Activated T-helper 1 cell treated with anti-CD3 and anti-CD28 coated beads, Interleukin-12 subunit alpha, Interleukin-12 subunit beta, Interleukin-2, Interleukin-4 antibody, amounts not matched to agents 30 ng/mL and 10 ng/mL and 1 ng/mL, durations not matched to agents 14 hours and 24 hours and 36 hours (primary cell): ENCODE measurements at regions of chr19 and their contacts with region 1.

Region 1: GRCh38 chr19:34145741-34146202 is 26.5 kb upstream of the LSM14A start:
- DNase-seq: peak; percentile 31
- H3K4me3 Mint-ChIP-seq: no peak overlapping the region
- H3K27ac Mint-ChIP-seq: no peak overlapping the region
- H3K4me1 Mint-ChIP-seq: no peaks in the 10 kb centered on the region
- H3K27me3 Mint-ChIP-seq: no peaks in the 10 kb centered on the region

Region 2: GRCh38 chr19:34096020-34096915 is 49.5 kb before region 1 on chr19:
- intact Hi-C with region 1: loop called (anchors 1 kb)
- DNase-seq: no peak
- H3K4me3 Mint-ChIP-seq: no peak overlapping the region
- H3K27ac Mint-ChIP-seq: no peak overlapping the region
- H3K4me1 Mint-ChIP-seq: peaks cover 6% of the 10 kb centered on the region
- H3K27me3 Mint-ChIP-seq: peaks cover 12% of the 10 kb centered on the region

Region 3: GRCh38 chr19:34120846-34121639 is 24.7 kb before region 1 on chr19:
- intact Hi-C with region 1: loop called (anchors 1 kb)
- DNase-seq: peak; percentile 12
- H3K4me3 Mint-ChIP-seq: no peak overlapping the region
- H3K27ac Mint-ChIP-seq: no peak overlapping the region
- H3K4me1 Mint-ChIP-seq: peaks cover 9% of the 10 kb centered on the region
- H3K27me3 Mint-ChIP-seq: peaks cover 15% of the 10 kb centered on the region

Region 4: DNA sequence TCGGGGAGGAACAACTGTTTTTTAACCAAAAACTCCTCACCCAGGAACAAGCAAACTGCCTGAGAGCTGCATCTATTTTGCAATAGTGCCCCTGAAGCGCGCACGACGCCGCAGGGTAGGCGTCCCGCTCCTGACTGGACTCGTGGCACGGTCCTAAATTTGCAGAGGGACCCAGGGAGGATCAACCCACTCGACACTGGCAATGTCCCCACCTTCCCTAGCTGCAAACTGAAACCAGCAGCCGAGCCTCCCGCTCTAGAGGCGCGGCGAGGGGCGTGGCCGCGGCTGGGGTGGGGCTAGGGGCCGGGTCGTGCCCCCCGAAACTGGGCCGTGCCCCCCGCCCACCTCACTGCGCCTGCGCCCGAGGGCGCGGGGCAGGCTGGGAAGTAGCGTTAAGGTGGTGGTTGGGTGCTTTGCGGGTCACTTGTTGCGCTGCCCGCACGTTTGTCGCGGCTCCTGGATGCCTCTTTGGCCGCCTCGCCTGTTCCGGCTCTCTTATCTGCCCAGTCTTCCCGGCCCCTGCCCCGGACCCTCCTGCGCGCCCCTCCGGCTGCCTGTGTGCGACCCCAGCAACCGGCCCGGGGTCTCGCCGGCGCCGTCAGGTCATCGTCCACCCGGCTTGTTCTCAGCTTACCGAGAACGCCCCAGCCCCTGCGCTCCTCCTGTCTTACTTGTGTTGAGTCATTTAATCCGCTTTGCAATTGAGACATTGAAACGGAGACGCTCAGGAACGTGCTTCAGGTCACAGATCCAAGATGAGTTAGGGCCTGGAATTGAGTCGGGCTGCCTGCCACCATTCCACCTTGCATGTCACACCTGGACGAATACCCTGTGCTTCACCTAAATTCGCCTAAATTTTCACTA is 11.3 kb before region 1 on chr19:
- intact Hi-C with region 1: loop called (anchors 1 kb)
- DNase-seq: peak; percentile 83
- H3K4me3 Mint-ChIP-seq: peak overlapping the region; percentile 88
- H3K27ac Mint-ChIP-seq: peak overlapping the region; percentile 77
- H3K4me1 Mint-ChIP-seq: no peaks in the 10 kb centered on the region
- H3K27me3 Mint-ChIP-seq: peaks cover 10% of the 10 kb centered on the region

Region 5: DNA sequence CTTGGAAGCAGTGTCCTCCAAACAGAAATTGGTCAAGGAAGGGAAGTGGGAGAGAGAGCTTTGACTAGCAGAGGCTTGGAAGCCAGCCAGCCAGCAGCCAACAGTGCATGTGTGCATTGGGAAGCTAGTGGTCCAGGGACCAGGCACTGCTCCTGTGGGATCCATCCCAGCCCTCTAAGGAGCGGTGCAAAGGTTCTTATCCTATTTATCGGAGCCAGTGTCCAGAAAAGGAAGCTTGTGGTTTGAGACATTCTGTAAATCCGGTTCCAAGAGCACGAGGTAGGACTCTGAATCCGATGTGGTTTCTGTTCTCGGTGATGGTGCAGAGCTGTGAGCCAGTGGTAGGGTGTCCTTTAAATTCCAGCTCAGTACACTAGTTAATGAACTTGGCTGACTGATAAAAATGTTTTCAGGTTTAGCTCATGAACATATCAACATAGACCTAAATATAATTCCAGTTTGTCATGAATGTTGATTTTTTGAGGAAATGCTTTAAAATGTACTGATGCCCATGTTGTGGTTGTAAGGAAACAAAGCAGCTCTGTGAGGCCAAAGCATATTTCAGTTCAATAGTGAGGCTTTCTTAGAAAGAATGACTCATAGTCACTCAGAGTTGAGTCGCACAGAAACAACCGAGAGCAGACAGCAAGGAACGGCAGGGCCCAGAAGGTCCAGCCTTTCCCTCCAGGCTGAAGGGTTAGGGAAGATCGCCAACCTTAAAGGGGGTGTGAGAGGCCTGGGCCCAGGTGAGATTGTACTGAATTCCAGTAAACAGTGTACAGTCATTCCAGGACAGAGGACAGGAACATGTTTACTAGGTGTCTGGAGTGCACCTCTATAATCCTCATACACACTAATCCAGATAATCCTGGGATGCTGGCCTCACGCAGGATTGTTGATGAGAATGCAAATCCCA is 87.1 kb after region 1 on chr19:
- intact Hi-C with region 1: no loop called
- DNase-seq: peak; percentile 5
- H3K4me3 Mint-ChIP-seq: peak overlapping the region; percentile 62
- H3K27ac Mint-ChIP-seq: peak overlapping the region; percentile 76
- H3K4me1 Mint-ChIP-seq: peaks cover 31% of the 10 kb centered on the region
- H3K27me3 Mint-ChIP-seq: no peaks in the 10 kb centered on the region